CD4-positive, alpha-beta memory T cell (primary cell): ENCODE measurements at regions of chr11 and their contacts with region 1.

Region 1: GRCh38 chr11:111926505-111927391 is 8.0 kb downstream of the C11orf52 start:
- DNase-seq: peak; percentile 94 to 98 (median 96)
- H3K4me3 ChIP-seq: peak overlapping the region; percentile 60 to 73
- H3K4me3 Mint-ChIP-seq: peak overlapping the region; percentile 81 to 90 (median 88)
- H3K27ac ChIP-seq: peak overlapping the region; percentile 69
- H3K27ac Mint-ChIP-seq: peak overlapping the region; percentile 92 to 97 (median 95)
- H3K4me1 ChIP-seq: peaks cover 14% of the 10 kb centered on the region
- H3K4me1 Mint-ChIP-seq: peaks cover 6 to 22% (median 14%) of the 10 kb centered on the region in 4 donors
- H3K27me3 ChIP-seq: no peaks in the 10 kb centered on the region
- H3K27me3 Mint-ChIP-seq: peaks cover 0 to 2% of the 10 kb centered on the region in 2 donors

Region 2: DNA sequence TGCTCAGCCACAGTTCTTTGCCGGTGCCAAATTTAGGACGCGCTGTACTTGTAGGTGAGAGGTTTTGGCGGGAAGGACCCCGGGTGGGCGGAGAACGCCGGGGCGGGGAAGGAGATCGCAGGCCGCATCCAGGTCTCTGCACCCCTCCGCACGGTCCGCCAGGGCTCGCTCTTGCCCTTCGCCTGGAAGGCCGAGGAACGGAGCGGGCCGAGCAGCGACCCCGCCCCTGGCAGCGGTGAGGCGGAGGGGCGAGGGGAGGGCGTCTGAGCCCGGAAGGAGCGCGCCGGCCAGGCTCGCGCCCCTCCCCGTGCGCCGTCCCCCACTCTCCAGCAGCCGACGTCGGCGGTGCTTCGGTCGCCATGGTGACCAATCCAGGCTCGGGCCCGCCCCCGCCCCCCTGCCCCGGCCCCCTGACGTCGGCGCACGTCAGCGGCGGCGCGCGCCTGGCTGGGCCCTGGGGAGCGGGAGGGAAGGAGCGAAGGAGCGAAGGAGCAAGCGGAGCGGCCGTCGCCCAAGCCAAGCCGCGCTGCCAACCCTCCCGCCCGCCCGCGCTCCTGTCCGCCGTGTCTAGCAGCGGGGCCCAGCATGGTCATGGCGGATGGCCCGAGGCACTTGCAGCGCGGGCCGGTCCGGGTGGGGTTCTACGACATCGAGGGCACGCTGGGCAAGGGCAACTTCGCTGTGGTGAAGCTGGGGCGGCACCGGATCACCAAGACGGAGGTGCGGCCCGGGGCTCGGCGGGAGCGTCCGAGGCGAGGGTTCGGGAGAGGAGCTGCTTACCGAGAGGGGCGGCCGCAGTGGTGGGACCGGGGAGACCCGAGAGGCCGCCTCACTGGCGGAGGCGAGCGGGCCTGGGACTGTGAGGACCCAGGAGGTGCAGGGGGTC is 324.5 kb before region 1 on chr11 and contains the start of gene SIK2:
- CTCF ChIA-PET with region 1: interaction called, 4 read pairs
- POLR2A ChIA-PET with region 1: no interaction called
- intact Hi-C with region 1: loop called (anchors 5 kb)
- DNase-seq: peak; percentile 87 to 90 (median 88)
- H3K4me3 ChIP-seq: peak within 1 kb of the TSS; percentile 66 to 75
- H3K4me3 Mint-ChIP-seq: peak within 1 kb of the TSS; percentile 90 to 99 (median 96)
- H3K27ac ChIP-seq: peak within 1 kb of the TSS; percentile 85
- H3K27ac Mint-ChIP-seq: peak within 1 kb of the TSS; percentile 91 to 99 (median 98)
- H3K4me1 ChIP-seq: peaks cover 24% of the 10 kb centered on the region
- H3K4me1 Mint-ChIP-seq: peaks cover 13 to 37% (median 19%) of the 10 kb centered on the region in 4 donors
- H3K27me3 ChIP-seq: no peaks in the 10 kb centered on the region
- H3K27me3 Mint-ChIP-seq: no peaks in the 10 kb centered on the region
- total RNA-seq, gene SIK2: 12.8 to 13.8 TPM

Region 3: DNA sequence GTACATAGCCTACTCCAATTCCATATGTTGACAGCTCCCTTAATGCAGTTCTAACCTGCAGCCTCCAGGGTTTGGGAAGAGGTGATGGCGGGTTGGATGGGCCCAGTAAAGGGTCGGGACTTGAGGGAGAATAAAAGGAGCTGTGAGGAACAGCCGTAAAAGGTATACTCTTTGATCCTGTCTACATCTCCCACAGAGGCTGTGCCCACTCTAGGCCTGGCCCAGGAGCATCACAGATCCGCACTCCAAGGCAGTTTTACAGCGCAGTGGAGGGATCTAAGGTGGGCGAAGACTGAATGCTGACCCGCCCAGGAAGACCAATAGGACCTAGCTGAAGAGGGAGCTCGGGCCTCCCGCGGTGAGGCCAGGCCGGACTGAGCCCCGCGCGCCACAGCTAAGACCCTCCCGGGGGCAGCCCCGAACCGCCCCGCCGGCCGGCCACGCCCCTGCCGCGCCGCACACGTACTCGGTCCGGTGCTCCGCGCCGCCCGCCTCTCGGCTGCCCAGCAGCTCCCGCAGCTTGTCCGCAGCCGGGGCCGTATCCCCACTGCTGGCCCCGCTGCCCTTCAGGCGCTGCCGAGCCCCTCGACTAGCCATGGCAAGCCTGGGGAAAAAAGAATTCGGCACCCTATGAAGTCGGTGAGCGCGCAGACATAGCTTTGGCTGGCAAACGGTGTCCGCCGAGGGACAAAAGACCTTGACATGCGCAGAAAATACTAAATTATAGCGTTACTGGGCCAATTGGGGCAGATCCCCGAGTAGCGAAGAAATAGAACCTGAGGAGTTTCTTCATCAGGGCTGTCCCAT is 55.7 kb before region 1 on chr11 and contains the start of gene ALG9:
- CTCF ChIA-PET with region 1: interaction called, 11 read pairs
- POLR2A ChIA-PET with region 1: interaction called, 28 read pairs
- intact Hi-C with region 1: loop called (anchors 1 kb)
- DNase-seq: peak; percentile 88 to 92 (median 88)
- H3K4me3 ChIP-seq: peak within 1 kb of the TSS; percentile 79
- H3K4me3 Mint-ChIP-seq: peak within 1 kb of the TSS; percentile 91 to 96 (median 94)
- H3K27ac ChIP-seq: peak within 1 kb of the TSS; percentile 91
- H3K27ac Mint-ChIP-seq: peak within 1 kb of the TSS; percentile 94 to 98 (median 96)
- H3K4me1 ChIP-seq: peaks cover 22% of the 10 kb centered on the region
- H3K4me1 Mint-ChIP-seq: peaks cover 10 to 37% (median 26%) of the 10 kb centered on the region in 4 donors
- H3K27me3 ChIP-seq: no peaks in the 10 kb centered on the region
- H3K27me3 Mint-ChIP-seq: no peaks in the 10 kb centered on the region
- total RNA-seq, gene ALG9: 28.2 to 28.3 TPM

Region 4: DNA sequence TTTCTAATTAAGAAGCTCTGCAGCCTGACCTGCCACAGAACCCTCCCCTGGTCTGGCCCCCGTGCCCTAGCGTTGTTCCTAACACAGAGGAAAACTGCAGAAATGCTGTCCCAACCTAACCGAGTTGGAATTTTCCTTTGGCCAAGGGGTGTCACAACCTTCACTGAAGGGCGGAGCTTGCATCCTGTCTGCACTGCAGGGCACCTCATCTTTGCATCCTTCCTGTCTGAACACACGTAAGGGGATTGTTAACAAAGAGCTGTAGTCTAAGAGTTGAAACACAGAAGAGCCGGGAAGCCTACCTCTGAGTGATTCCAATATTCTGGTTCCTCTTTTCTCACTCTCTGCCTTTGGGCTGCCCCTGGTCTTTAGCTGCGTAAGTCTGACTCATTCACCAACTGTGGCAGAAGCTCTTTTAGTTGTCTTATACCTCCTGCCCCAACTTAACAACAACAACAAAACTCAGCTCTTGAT is 12.0 kb after region 1 on chr11:
- CTCF ChIA-PET with region 1: interaction called, 34 read pairs
- POLR2A ChIA-PET with region 1: interaction called, 36 read pairs
- intact Hi-C with region 1: no loop called
- DNase-seq: peak; percentile 7 to 55 (median 19)
- H3K4me3 ChIP-seq: no peak overlapping the region
- H3K4me3 Mint-ChIP-seq: peak overlapping the region; percentile 47 to 85 (median 70)
- H3K27ac ChIP-seq: no peak overlapping the region
- H3K27ac Mint-ChIP-seq: peak overlapping the region; percentile 36 to 94 (median 75)
- H3K4me1 ChIP-seq: peaks cover 31% of the 10 kb centered on the region
- H3K4me1 Mint-ChIP-seq: peaks cover 18 to 37% (median 26%) of the 10 kb centered on the region in 4 donors
- H3K27me3 ChIP-seq: no peaks in the 10 kb centered on the region
- H3K27me3 Mint-ChIP-seq: no peaks in the 10 kb centered on the region

Region 5: GRCh38 chr11:112024773-112025678 is 98.3 kb after region 1 on chr11 and contains the start of gene DLAT:
- CTCF ChIA-PET with region 1: interaction called, 3 read pairs
- POLR2A ChIA-PET with region 1: interaction called, 14 read pairs
- intact Hi-C with region 1: loop called (anchors 2 kb)
- DNase-seq: peak; percentile 85 to 89 (median 86)
- H3K4me3 ChIP-seq: peak within 1 kb of the TSS; percentile 99 to 100
- H3K4me3 Mint-ChIP-seq: peak within 1 kb of the TSS; percentile 97 to 100 (median 100)
- H3K27ac ChIP-seq: peak within 1 kb of the TSS; percentile 78
- H3K27ac Mint-ChIP-seq: peak within 1 kb of the TSS; percentile 92 to 100 (median 99)
- H3K4me1 ChIP-seq: peaks cover 15% of the 10 kb centered on the region
- H3K4me1 Mint-ChIP-seq: peaks cover 13 to 41% (median 27%) of the 10 kb centered on the region in 4 donors
- H3K27me3 ChIP-seq: no peaks in the 10 kb centered on the region
- H3K27me3 Mint-ChIP-seq: no peaks in the 10 kb centered on the region
- total RNA-seq, gene DLAT: 19.4 to 21.6 TPM

Region 6: GRCh38 chr11:112086422-112087191 is 159.9 kb after region 1 on chr11 and contains the starts of genes SDHD and TIMM8B:
- CTCF ChIA-PET with region 1: interaction called, 10 read pairs
- POLR2A ChIA-PET with region 1: interaction called, 13 read pairs
- intact Hi-C with region 1: loop called (anchors 1 kb)
- DNase-seq: peak; percentile 96 to 98 (median 97)
- H3K4me3 ChIP-seq: peak within 1 kb of the TSS; percentile 97 to 100
- H3K4me3 Mint-ChIP-seq: peak within 1 kb of the TSS; percentile 93 to 100 (median 99)
- H3K27ac ChIP-seq: peak within 1 kb of the TSS; percentile 79
- H3K27ac Mint-ChIP-seq: peak within 1 kb of the TSS; percentile 91 to 100 (median 99)
- H3K4me1 ChIP-seq: peaks cover 39% of the 10 kb centered on the region
- H3K4me1 Mint-ChIP-seq: peaks cover 41 to 62% (median 49%) of the 10 kb centered on the region in 4 donors
- H3K27me3 ChIP-seq: no peaks in the 10 kb centered on the region
- H3K27me3 Mint-ChIP-seq: no peaks in the 10 kb centered on the region
- total RNA-seq, gene SDHD: 61.2 to 65.5 TPM
- total RNA-seq, gene TIMM8B: 26.2 to 28.0 TPM